ENCODE measurements at regions of chr2 and their contacts with region 1.

Region 1: DNA sequence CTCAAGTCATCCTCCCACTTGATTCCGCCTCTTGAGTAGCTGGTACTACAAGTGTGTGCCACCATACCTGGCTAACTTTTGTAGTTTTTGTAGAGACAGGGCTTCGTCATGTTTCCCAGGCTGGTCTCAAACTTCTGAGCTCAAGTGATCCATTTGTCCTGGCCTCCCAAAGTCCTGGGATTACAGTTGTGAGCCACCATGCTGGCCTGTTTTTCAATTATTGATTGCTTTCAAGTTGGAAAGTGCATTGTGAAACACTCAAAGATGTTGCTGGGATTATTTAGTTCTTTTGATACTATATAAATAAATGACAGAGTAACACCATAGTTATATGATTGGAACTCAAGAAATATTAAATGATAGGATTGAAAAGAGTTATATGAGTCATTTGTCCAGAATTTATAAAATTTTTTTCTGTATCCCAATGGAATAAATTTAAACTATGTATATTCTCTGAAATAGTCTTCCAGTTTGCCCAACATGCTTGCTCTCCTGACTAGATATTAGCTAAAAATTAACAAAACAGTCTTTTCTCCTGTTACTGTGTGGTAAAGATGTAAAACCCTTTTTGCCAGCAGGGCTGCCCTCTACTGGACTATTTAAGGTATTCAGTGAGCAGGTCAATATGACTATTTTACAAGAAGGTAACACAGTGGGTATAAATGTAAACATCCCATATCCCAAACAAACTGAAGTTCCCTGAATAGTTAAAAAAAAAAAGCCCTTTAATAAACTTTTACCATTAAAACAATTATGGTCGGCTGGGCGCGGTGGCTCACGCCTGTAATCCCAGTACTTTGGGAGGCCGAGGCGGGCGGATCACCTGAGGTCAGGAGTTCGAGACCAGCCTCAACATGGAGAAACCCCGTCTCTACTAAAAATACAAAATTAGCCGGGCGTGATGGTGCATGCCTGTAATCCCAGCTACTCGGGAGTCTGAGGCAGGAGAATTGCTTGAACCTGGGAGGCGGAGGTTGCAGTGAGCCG is 42.7 kb downstream of the ACSL3 start:
- DNase-seq: peak; percentile 30
- H3K4me3 ChIP-seq: no peak overlapping the region
- H3K27ac ChIP-seq: peak overlapping the region in 3 of 4 donors; percentile 17 to 65 (median 49)
- H3K4me1 ChIP-seq: peaks cover 0 to 47% (median 7%) of the 10 kb centered on the region in 4 donors
- H3K27me3 ChIP-seq: no peaks in the 10 kb centered on the region
- CTCF ChIP-seq: peak; percentile 62 to 74 (median 66)
- EP300 ChIP-seq: no peak
- POLR2A ChIP-seq: no peak

Region 2: GRCh38 chr2:222688917-222689316 is 214.6 kb before region 1 on chr2:
- in situ Hi-C with region 1: loop called in 2 of 4 experiments (anchors 10 kb)
- intact Hi-C with region 1: no loop called
- DNase-seq: no peak
- H3K4me3 ChIP-seq: no peak overlapping the region
- H3K27ac ChIP-seq: no peak overlapping the region
- H3K4me1 ChIP-seq: no peaks in the 10 kb centered on the region
- H3K27me3 ChIP-seq: no peaks in the 10 kb centered on the region
- CTCF ChIP-seq: no peak
- EP300 ChIP-seq: no peak
- POLR2A ChIP-seq: no peak

Region 3: DNA sequence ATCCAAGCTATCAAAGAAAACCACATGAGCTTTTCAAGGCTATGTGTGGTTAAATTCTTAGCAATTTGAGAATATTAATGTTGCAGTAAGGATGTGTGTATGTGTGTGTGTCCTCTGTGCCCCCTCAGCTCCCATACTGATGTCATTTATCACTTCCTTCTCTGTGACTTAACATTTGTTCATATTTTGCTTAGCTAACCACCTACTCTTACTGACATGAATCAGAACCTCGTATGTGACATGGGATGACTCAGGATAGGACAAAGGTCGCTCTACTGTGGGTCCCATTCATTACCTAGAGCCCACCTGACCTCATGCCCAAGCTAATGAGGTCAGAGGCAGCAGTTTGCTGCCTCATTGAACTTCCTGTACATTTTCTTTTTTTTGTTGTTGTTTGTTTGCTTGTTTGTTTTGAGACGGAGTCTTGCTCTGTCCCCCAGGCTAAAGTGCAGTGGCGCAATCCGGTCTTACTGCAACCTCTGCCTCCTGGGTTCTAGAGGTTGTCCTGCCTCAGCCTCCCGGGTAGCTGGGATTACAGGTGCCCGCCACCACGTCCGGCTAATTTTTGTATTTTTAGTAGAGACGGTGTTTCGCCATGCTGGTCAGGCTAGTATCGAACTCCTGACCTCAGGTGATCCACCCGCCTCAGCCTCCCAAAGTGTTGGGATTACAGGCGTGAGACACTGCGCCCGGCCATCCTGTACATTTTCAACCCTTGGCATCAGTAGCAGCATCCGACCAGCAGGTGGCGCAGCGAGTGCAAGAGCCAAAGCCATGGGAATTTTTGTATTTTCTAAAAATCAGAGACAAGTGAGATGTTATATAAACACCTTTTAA is 195.6 kb before region 1 on chr2:
- in situ Hi-C with region 1: loop called in 2 of 4 experiments (anchors 10 to 25 kb)
- intact Hi-C with region 1: loop called (anchors 10 kb)
- DNase-seq: peak; percentile 82
- H3K4me3 ChIP-seq: no peak overlapping the region
- H3K27ac ChIP-seq: no peak overlapping the region
- H3K4me1 ChIP-seq: peaks cover 0 to 17% (median 10%) of the 10 kb centered on the region in 4 donors
- H3K27me3 ChIP-seq: no peaks in the 10 kb centered on the region
- CTCF ChIP-seq: peak; percentile 95 to 99 (median 96)
- EP300 ChIP-seq: no peak
- POLR2A ChIP-seq: no peak

Region 4: DNA sequence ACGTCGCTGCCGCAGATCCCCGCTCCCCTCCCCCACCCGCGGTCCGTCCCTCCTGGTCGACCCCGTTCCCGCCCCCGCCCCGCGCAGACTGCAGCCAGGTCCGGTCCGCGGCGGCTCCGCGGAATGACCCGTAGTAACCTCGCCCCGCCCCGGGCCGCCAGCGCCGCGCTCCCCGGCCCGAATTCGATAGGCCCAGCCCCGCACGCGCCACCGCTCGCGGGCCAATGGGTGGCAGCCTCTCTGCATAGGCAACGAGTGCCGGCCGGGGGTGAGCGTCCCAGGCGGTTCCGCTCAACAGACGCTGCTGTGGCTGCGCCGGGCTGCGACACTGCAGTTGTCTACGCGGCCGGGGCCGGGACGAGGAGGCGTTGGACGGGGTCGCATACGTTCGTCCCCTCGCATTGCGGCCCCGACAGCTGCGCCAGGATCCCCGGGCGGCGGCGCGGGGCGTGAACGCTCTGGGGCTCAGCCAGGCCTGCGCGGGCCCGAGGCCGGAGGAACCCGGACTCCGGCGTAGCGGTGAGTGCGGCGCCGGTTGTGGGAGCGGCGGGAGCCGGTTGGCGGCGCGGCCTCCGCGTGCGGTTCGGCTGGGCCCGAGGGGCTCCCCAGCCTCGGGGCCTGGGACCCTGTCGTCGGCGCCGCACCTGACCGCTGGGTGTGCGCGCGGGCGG is 42.7 kb before region 1 on chr2 and contains the start of gene ACSL3:
- in situ Hi-C with region 1: no loop called
- intact Hi-C with region 1: loop called (anchors 5 kb)
- DNase-seq: peak; percentile 97
- H3K4me3 ChIP-seq: peak within 1 kb of the TSS; percentile 65 to 93 (median 84)
- H3K27ac ChIP-seq: peak within 1 kb of the TSS; percentile 94 to 99 (median 98)
- H3K4me1 ChIP-seq: peaks cover 18 to 48% (median 39%) of the 10 kb centered on the region in 4 donors
- H3K27me3 ChIP-seq: no peaks in the 10 kb centered on the region
- CTCF ChIP-seq: peak in 1 of 5 experiments; percentile 32
- EP300 ChIP-seq: no peak
- POLR2A ChIP-seq: peak; percentile 99
- total RNA-seq, gene ACSL3: 22.4 to 54.1 (median 42.3) TPM

Region 5: GRCh38 chr2:223051693-223052289 is 148.3 kb after region 1 on chr2 and contains the start of gene KCNE4:
- in situ Hi-C with region 1: no loop called
- intact Hi-C with region 1: no loop called
- DNase-seq: peak; percentile 17
- H3K4me3 ChIP-seq: peak within 1 kb of the TSS; percentile 24 to 50 (median 36)
- H3K27ac ChIP-seq: peak within 1 kb of the TSS; percentile 78 to 90 (median 86)
- H3K4me1 ChIP-seq: peaks cover 6 to 56% (median 12%) of the 10 kb centered on the region in 4 donors
- H3K27me3 ChIP-seq: no peaks in the 10 kb centered on the region
- CTCF ChIP-seq: no peak
- EP300 ChIP-seq: no peak
- POLR2A ChIP-seq: peak; percentile 62
- total RNA-seq, gene KCNE4: 0.79 to 4.6 (median 1.7) TPM

Measured in transverse colon (tissue), 4 donors.